BJ (cell line): ENCODE measurements at regions of chr6 and their contacts with region 1.

Region 1: GRCh38 chr6:157764178-157765033 is 58.6 kb upstream of the SNX9 start:
- DNase-seq: peak; percentile 100
- H3K4me3 ChIP-seq: no peak overlapping the region
- H3K27me3 ChIP-seq: no peaks in the 10 kb centered on the region
- CTCF ChIP-seq: no peak

Region 2: GRCh38 chr6:157656437-157656997 is 107.9 kb before region 1 on chr6:
- CTCF ChIA-PET with region 1: no interaction called
- POLR2A ChIA-PET with region 1: interaction called, 16 read pairs
- DNase-seq: no peak
- H3K4me3 ChIP-seq: no peak overlapping the region
- H3K27me3 ChIP-seq: no peaks in the 10 kb centered on the region
- CTCF ChIP-seq: no peak

Region 3: DNA sequence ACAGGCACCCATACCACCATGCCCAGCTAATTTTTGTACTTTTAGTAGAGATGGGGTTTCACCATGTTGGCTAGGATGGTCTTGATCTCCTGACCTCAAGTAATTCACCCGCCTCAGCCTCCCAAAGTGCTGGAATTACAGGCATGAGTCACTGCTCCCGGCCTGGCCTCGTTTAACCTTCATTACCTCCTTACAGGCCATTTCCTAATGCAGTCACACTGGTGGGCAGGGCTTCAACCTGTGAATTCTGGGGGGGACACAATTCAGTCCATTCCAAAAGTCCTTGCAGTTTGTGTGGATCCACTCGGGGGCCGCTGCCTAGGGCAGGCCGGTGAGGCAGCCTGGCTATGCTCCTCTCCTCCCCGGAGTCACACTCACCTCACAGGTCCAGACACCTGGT is 53.8 kb before region 1 on chr6:
- CTCF ChIA-PET with region 1: interaction called, 10 read pairs
- POLR2A ChIA-PET with region 1: interaction called, 6 read pairs
- DNase-seq: no peak
- H3K4me3 ChIP-seq: no peak overlapping the region
- H3K27me3 ChIP-seq: no peaks in the 10 kb centered on the region
- CTCF ChIP-seq: no peak

Region 4: DNA sequence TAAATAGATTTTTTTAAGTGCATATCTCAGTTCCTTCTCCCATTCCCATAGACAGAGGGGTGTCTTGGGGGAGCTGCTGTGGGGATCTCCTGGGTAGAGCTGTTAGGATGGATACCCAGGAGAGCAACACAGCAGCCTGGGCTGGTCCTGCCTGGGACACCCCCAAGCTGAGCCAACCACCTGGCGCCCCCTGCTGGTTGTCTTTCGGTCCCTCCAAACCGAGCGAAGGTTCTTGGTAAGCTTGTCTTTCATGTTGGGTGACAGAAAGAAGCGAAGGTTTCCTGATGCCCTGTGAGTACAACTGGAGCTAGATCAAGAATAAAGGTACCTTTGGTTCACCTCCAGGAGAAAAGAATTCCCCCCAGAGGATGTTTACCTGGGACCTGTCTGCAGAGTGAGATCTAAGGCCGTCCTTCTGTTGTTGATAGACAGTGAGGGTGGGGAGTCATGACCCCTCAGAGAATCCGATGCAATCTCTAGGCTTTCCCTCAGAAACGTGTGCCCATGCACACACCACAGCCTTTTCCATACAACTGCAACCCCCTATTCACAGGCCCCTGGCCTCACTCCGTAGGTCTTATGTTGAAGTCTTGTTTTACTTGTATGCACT is 109.4 kb after region 1 on chr6:
- CTCF ChIA-PET with region 1: interaction called, 30 read pairs
- POLR2A ChIA-PET with region 1: no interaction called
- DNase-seq: no peak
- H3K4me3 ChIP-seq: no peak overlapping the region
- H3K27me3 ChIP-seq: no peaks in the 10 kb centered on the region
- CTCF ChIP-seq: peak; percentile 86

Region 5: DNA sequence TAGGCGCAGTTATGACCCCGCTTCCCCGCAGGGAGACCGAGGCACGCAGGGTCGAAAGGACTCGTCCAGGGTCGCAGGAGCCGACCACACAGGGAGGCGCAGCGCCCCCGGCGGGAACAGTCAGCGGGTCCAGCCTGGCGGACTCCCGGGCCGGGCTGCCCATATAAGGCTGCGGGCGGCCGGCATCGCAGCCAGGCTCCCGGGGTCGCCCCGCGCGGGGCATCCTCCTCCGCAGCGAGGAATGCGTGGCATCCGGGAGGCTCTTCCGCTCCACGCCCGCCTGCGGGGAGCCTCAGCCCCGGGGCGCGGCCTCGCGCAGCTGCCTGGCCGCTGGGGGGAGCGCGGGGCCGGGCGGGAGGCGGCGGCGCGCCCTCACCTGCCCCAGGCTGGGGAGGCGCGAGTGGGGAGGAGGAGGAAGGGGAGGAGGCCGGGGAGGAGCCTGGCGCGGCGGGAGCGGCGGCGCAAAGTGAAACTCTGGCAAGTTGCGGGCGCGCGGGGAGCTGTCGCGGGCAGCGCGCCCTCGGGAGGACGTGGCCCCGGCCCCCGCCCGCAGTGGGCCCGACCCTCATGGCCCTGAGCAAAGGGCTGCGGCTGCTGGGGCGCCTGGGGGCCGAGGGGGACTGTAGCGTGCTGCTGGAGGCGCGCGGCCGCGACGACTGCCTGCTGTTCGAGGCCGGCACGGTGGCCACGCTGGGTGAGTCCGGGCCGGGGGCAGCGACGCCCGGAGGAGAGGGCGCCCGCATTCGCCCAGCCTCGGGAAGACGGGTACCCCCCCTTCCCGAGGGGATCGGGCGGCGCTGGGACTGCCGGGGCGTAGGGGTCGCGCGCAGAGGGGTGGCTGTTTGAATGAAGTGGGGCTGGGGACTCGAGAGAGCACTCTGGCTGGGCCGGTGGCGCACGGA is 217.2 kb after region 1 on chr6 and contains the start of gene SYNJ2:
- CTCF ChIA-PET with region 1: no interaction called
- POLR2A ChIA-PET with region 1: no interaction called
- DNase-seq: peak; percentile 55
- H3K4me3 ChIP-seq: peak within 1 kb of the TSS; percentile 88
- H3K27me3 ChIP-seq: no peaks in the 10 kb centered on the region
- CTCF ChIP-seq: peak; percentile 62
- polyA plus RNA-seq, gene SYNJ2: 24.3 and 29.9 TPM in 2 replicates

Region 6: DNA sequence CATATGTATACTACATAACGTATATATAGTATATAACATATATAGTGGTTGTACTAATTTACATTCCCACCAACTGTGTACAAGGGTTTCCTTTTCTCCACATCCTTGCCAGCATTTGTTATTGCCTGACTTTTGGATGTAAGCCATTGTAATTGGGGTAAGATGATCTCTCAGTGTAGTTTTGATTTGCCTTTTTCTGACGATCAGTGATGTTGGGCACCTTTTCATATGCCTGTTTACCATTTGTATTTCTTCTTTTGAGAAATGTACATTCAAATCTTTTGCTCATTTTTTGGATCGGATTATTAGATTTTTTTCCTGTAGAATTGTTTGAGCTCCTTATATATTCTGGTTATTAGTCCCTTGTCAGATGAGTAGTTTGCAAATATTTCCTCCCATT is 228.7 kb after region 1 on chr6:
- CTCF ChIA-PET with region 1: no interaction called
- POLR2A ChIA-PET with region 1: interaction called, 11 read pairs
- DNase-seq: no peak
- H3K4me3 ChIP-seq: no peak overlapping the region
- H3K27me3 ChIP-seq: no peaks in the 10 kb centered on the region
- CTCF ChIP-seq: no peak